ENCODE measurements at regions of chr11 and their contacts with region 1.

Region 1: DNA sequence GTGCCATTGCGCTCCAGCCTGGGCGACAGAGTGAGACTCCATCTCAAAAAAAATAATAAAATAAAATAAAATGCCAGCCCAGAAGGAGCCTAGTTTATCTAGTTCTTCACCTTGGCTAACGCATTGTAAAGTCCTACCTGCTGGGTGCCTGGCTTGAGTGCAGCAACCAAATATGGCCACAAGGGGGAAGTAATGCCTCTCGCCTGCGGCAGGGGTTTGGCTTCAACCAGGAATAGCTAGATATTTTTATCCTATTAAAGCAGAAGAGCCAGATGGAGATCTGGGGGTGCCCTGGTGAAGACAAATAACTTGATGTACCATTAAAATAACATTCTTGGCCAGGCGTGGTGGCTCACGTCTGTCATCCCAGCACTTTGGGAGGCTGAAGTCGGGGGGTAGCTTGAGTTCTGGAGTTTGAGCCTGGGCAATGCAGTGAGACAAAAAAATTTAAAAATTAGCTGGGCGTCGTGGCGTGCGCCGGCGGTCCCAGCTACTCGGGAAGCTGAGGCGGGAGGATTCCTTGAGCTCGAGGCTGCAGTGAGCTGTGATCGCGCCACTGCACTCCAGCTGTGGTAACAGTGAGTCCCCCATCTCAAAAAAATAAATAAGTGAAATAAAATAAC is 20.6 kb upstream of the PLEKHB1 start:
- DNase-seq: peak; percentile 80 to 83 (median 82)
- ATAC-seq: peak; percentile 94
- H3K4me3 ChIP-seq: no peak overlapping the region
- H3K27ac ChIP-seq: no peak overlapping the region
- H3K4me1 ChIP-seq: peaks cover 0 to 5% of the 10 kb centered on the region in 2 experiments; a peak in 2 of 5 replicates
- H3K27me3 ChIP-seq: peaks cover 5% of the 10 kb centered on the region in 2 experiments; a peak in 3 of 5 replicates
- CTCF ChIP-seq: peak; percentile 85 to 95 (median 91)
- EP300 ChIP-seq: no peak
- POLR2A ChIP-seq: no peak
- RAD21 ChIP-seq: peak; percentile 61 to 90

Region 2: GRCh38 chr11:73218106-73218829 is 407.5 kb before region 1 on chr11 and contains the start of gene P2RY2:
- CTCF ChIA-PET with region 1: no interaction called
- POLR2A ChIA-PET with region 1: no interaction called
- in situ Hi-C with region 1: no loop called
- intact Hi-C with region 1: no loop called
- DNase-seq: no peak
- ATAC-seq: no peak
- H3K4me3 ChIP-seq: no peak within 1 kb of the TSS
- H3K27ac ChIP-seq: no peak within 1 kb of the TSS
- H3K4me1 ChIP-seq: peaks cover 5 to 20% of the 10 kb centered on the region in 2 experiments; a peak in 4 of 5 replicates
- H3K27me3 ChIP-seq: peaks cover 0 to 6% of the 10 kb centered on the region in 2 experiments; a peak in 1 of 5 replicates
- CTCF ChIP-seq: no peak
- EP300 ChIP-seq: no peak
- POLR2A ChIP-seq: no peak
- RAD21 ChIP-seq: no peak
- polyA plus RNA-seq, gene P2RY2: not detected

Region 3: DNA sequence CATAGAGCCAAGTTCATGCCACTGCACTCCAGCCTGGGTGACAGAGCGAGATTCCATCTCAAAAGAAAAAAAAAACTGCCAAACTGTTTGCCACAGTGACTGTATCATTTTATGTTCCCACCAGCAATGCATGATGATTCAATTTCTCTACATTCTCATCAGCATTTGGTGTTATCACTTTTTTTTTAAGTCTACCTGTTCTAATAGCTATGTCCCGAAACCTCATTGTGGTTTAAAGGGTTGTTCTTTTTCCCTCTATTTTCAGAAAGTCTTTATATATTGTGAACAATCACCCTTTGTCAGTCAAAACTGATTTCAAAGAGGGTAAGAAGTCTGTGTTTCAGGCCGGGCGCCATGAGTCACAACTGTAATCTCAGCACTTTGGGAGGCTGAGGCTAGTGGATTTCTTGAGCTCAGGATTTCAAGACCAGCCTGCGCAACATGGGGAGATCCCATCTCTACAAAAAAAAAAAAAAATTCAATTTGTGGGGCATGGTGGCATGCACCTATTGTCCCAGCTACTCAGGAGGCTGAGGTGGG is 13.1 kb before region 1 on chr11:
- CTCF ChIA-PET with region 1: no interaction called
- POLR2A ChIA-PET with region 1: interaction called, 11 read pairs
- in situ Hi-C with region 1: no loop called
- intact Hi-C with region 1: no loop called
- DNase-seq: no peak
- ATAC-seq: no peak
- H3K4me3 ChIP-seq: no peak overlapping the region
- H3K27ac ChIP-seq: no peak overlapping the region
- H3K4me1 ChIP-seq: no peaks in the 10 kb centered on the region
- H3K27me3 ChIP-seq: peaks cover 20 to 21% of the 10 kb centered on the region in 2 experiments; a peak in 4 of 5 replicates
- CTCF ChIP-seq: no peak
- EP300 ChIP-seq: no peak
- POLR2A ChIP-seq: no peak
- RAD21 ChIP-seq: no peak